Right cardiac atrium (tissue), 5 donors: ENCODE measurements at regions of chr5 and their contacts with region 1.

Region 1: GRCh38 chr5:132419502-132420468 is 50.3 kb downstream of the SLC22A5 start:
- DNase-seq: peak; percentile 70 to 85 (median 83)
- ATAC-seq: peak; percentile 75 to 77
- H3K4me3 ChIP-seq: no peak overlapping the region
- H3K27ac ChIP-seq: peak overlapping the region; percentile 82
- H3K4me1 ChIP-seq: peaks cover 42% of the 10 kb centered on the region
- H3K27me3 ChIP-seq: no peaks in the 10 kb centered on the region

Region 2: GRCh38 chr5:132473019-132473531 is 53.3 kb after region 1 on chr5:
- intact Hi-C with region 1: loop called in 1 of 4 experiments (anchors 10 kb)
- DNase-seq: peak in 1 of 3 donors; percentile 70
- ATAC-seq: no peak
- H3K4me3 ChIP-seq: no peak overlapping the region
- H3K27ac ChIP-seq: no peak overlapping the region
- H3K4me1 ChIP-seq: peaks cover 32% of the 10 kb centered on the region
- H3K27me3 ChIP-seq: no peaks in the 10 kb centered on the region

Region 3: DNA sequence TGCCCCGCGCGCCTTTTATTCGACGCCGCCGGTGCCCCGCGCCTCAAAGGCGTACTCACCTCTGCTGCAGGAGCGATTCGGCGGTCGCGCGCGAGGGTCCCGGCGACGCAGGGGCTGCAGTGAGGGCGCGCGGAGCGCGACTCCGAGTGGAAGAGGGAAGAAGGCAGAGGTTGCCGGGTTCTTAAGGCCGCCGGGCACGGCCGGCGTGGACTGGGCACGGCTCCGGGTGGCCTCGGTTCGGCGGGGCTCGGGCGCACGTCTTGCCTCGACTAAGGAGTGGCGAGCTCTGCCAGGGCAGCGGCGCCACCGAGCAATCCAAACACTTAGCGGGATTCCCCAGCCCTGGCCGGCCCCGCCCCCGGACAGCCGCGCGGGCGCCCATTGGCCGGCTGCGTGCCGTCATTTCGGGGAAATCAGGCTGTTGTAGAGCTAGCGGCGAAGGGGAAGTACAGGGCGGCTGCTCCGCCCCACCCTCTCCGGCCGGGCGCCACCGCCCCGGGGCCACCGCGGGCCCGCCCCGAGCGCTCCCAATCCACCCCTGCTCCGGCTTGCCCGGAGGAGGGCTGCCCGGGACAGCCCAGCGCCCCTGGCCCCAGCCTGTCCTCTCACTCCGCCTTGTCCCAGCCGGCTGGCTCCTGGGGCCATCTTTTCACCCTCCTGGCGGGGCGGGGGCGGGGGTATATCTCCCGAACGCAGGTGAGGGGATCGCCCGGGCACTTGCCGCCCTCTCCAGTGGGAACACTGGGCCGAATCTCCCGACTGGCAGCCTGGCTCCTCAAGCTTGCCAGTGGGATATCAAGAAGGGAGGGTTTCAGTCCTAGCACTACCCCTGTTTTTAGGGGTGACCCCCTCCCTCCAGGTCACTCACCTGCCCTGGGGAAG is 70.9 kb after region 1 on chr5 and contains the start of gene IRF1:
- intact Hi-C with region 1: loop called in 2 of 4 experiments (anchors 2 to 10 kb)
- DNase-seq: peak; percentile 97 to 99 (median 99)
- ATAC-seq: peak; percentile 93 to 94
- H3K4me3 ChIP-seq: peak within 1 kb of the TSS; percentile 74
- H3K27ac ChIP-seq: peak within 1 kb of the TSS; percentile 98
- H3K4me1 ChIP-seq: peaks cover 14% of the 10 kb centered on the region
- H3K27me3 ChIP-seq: no peaks in the 10 kb centered on the region
- total RNA-seq, gene IRF1: 9.4 to 17.9 (median 13.8) TPM

Region 4: GRCh38 chr5:132495667-132496190 is 75.9 kb after region 1 on chr5:
- intact Hi-C with region 1: loop called in 2 of 4 experiments (anchors 2 kb)
- DNase-seq: peak; percentile 92 to 97 (median 96)
- ATAC-seq: peak; percentile 75 to 76
- H3K4me3 ChIP-seq: peak overlapping the region; percentile 68
- H3K27ac ChIP-seq: peak overlapping the region; percentile 98
- H3K4me1 ChIP-seq: peaks cover 14% of the 10 kb centered on the region
- H3K27me3 ChIP-seq: no peaks in the 10 kb centered on the region